A549 (cell line): ENCODE measurements at regions of chr10 and their contacts with region 1.

Region 1: DNA sequence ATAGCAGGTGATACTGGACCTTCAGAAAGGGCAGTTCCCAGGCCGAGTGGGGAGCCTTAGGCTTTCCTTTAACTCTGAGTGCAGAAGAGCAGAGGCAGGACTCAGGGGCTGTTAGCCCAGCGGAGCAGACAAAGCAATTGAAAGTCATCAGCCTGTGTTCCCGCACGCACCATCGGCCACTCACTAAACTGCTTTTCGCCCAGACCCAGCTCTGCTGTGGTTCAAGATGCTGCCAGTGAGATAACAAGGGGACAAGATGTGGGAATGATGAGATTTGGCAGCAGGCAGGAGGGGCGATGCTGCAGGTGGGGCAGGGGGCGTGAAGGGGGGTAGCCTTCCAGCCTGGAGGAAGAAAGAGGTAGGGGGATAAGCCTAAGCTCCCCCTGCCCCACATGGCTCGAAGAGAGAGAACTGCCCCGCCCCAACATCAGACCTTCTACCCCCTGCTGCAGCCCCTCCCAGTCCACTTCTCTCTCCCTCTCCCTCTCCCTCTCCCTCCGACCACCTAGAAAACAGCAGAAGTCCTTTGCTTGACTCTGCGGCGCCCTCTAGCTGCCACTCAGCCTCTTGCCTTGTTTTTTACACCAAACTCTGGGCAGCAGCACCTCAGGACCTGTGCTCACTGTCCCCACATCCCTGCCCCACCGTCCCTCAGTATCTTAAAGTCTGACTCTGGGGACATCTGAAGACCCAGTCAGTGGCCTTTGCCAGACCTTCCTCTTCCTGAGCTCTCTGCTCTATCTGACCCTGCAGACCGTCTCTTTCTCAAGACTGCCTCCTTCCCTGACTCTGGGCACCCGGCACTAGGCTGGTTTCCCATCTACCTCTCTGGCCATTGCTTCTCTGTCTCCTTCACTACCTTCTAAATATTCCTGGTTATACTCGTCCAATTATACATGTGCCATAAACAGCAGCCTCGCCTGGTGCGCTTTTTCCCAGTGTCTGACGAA is 110.5 kb downstream of the C10orf105 start:
- DNase-seq: peak; percentile 63 to 71
- ATAC-seq: peak; percentile 58 to 86
- H3K4me3 ChIP-seq: no peak overlapping the region
- H3K27ac ChIP-seq: no peak overlapping the region
- H3K4me1 ChIP-seq: peaks cover 12% of the 10 kb centered on the region; the same call in 2 of the 3 replicates
- CTCF ChIP-seq: peak; percentile 69
- EP300 ChIP-seq: no peak
- POLR2A ChIP-seq: no peak
- RAD21 ChIP-seq: peak; percentile 70 to 78

Region 2: DNA sequence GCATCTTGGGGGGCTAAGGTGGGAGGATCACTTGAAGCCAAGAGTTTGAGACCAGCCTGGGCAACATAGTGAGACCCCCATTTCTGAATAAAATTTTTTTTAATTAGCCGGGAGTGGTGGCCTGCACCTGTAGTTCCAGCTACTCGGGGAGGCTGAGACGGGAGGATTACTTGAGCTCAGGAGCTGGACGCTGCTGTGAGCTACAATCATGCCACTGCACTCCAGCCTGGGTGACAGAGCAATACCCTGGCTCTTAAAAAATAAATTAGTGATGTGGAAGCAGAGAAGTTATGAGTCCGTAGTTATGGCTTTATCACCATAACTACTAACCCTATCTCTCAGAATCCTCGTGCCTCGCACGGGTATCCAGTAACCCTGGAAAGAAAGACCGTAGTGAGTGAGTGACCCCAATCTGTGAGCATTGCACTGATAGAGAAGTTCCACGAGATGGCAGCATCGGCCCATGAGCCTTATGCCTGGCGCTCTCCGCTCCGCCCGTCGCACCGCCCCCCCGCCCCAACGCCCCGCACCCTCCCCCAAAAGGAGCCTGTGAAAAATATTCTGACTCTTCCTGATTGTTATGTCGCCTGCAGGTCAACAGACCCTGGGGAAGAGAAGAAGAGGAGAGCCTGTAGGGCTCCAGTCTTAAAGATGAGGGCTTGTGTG is 294.9 kb before region 1 on chr10:
- CTCF ChIA-PET with region 1: interaction called, 67 read pairs
- POLR2A ChIA-PET with region 1: no interaction called
- DNase-seq: peak; percentile 55 to 70
- ATAC-seq: peak; percentile 52 to 77; a peak in 3 of 6 replicates
- H3K4me3 ChIP-seq: no peak overlapping the region
- H3K27ac ChIP-seq: peak overlapping the region; percentile 39 to 77; a peak in 5 of 6 replicates
- H3K4me1 ChIP-seq: 0 out of 3 replicates have a peak, but pooled peaks cover 3% of the 10 kb centered on the region
- CTCF ChIP-seq: peak; percentile 93
- EP300 ChIP-seq: no peak
- POLR2A ChIP-seq: no peak
- RAD21 ChIP-seq: peak; percentile 87 to 98

Region 3: GRCh38 chr10:71383972-71384687 is 225.0 kb before region 1 on chr10:
- CTCF ChIA-PET with region 1: interaction called, 84 read pairs
- POLR2A ChIA-PET with region 1: no interaction called
- DNase-seq: peak; percentile 58 to 78
- ATAC-seq: peak; percentile 91 to 98
- H3K4me3 ChIP-seq: no peak overlapping the region
- H3K27ac ChIP-seq: no peak overlapping the region
- H3K4me1 ChIP-seq: no peaks in the 10 kb centered on the region
- CTCF ChIP-seq: peak; percentile 86
- EP300 ChIP-seq: no peak
- POLR2A ChIP-seq: no peak
- RAD21 ChIP-seq: peak; percentile 85 to 89

Region 4: GRCh38 chr10:71509444-71509843 is 99.7 kb before region 1 on chr10:
- CTCF ChIA-PET with region 1: no interaction called
- POLR2A ChIA-PET with region 1: no interaction called
- DNase-seq: peak in 1 of 2 experiments; percentile 30
- ATAC-seq: no peak
- H3K4me3 ChIP-seq: no peak overlapping the region
- H3K27ac ChIP-seq: no peak overlapping the region
- H3K4me1 ChIP-seq: no peaks in the 10 kb centered on the region
- CTCF ChIP-seq: no peak
- EP300 ChIP-seq: no peak
- POLR2A ChIP-seq: no peak
- RAD21 ChIP-seq: no peak

Region 5: GRCh38 chr10:71589617-71590551 is 19.2 kb before region 1 on chr10:
- CTCF ChIA-PET with region 1: interaction called, 37 read pairs
- POLR2A ChIA-PET with region 1: interaction called, 3 read pairs
- DNase-seq: no peak
- ATAC-seq: no peak
- H3K4me3 ChIP-seq: no peak overlapping the region
- H3K27ac ChIP-seq: no peak overlapping the region
- H3K4me1 ChIP-seq: no peaks in the 10 kb centered on the region
- CTCF ChIP-seq: no peak
- EP300 ChIP-seq: no peak
- POLR2A ChIP-seq: no peak
- RAD21 ChIP-seq: no peak

Region 6: GRCh38 chr10:71623098-71623985 is 14.2 kb after region 1 on chr10:
- CTCF ChIA-PET with region 1: interaction called, 109 read pairs
- POLR2A ChIA-PET with region 1: no interaction called
- DNase-seq: peak; percentile 30 to 68
- ATAC-seq: peak; percentile 81 to 87
- H3K4me3 ChIP-seq: no peak overlapping the region
- H3K27ac ChIP-seq: peak overlapping the region in 1 of 2 experiments; percentile 52; a peak in 2 of 6 replicates
- H3K4me1 ChIP-seq: peaks cover 9% of the 10 kb centered on the region
- CTCF ChIP-seq: 0 out of 3 replicates have a peak, but pooled peaks have one; percentile 12
- EP300 ChIP-seq: no peak
- POLR2A ChIP-seq: no peak
- RAD21 ChIP-seq: peak in 1 of 2 experiments; percentile 32; a peak in 1 of 5 replicates